ENCODE measurements at regions of chr14 and their contacts with region 1.

Region 1: GRCh38 chr14:30223385-30223813 is 295.8 kb upstream of the PRKD1 start:
- H3K4me3 ChIP-seq: no peak overlapping the region
- H3K27ac ChIP-seq: no peak overlapping the region
- H3K4me1 ChIP-seq: peaks cover 20% of the 10 kb centered on the region
- CTCF ChIP-seq: no peak

Region 2: GRCh38 chr14:30243805-30244204 is 20.4 kb after region 1 on chr14:
- CTCF ChIA-PET with region 1: no interaction called
- POLR2A ChIA-PET with region 1: no interaction called
- H3K4me3 ChIP-seq: no peak overlapping the region
- H3K27ac ChIP-seq: no peak overlapping the region
- H3K4me1 ChIP-seq: no peaks in the 10 kb centered on the region
- CTCF ChIP-seq: no peak

Region 3: GRCh38 chr14:30291216-30291615 is 67.8 kb after region 1 on chr14:
- CTCF ChIA-PET with region 1: no interaction called
- POLR2A ChIA-PET with region 1: no interaction called
- H3K4me3 ChIP-seq: no peak overlapping the region
- H3K27ac ChIP-seq: no peak overlapping the region
- H3K4me1 ChIP-seq: no peaks in the 10 kb centered on the region
- CTCF ChIP-seq: no peak

Region 4: GRCh38 chr14:30312214-30312613 is 88.8 kb after region 1 on chr14:
- CTCF ChIA-PET with region 1: no interaction called
- POLR2A ChIA-PET with region 1: no interaction called
- H3K4me3 ChIP-seq: no peak overlapping the region
- H3K27ac ChIP-seq: no peak overlapping the region
- H3K4me1 ChIP-seq: no peaks in the 10 kb centered on the region
- CTCF ChIP-seq: no peak

Region 5: GRCh38 chr14:30389134-30389876 is 165.9 kb after region 1 on chr14:
- CTCF ChIA-PET with region 1: no interaction called
- POLR2A ChIA-PET with region 1: no interaction called
- H3K4me3 ChIP-seq: no peak overlapping the region
- H3K27ac ChIP-seq: no peak overlapping the region
- H3K4me1 ChIP-seq: no peaks in the 10 kb centered on the region
- CTCF ChIP-seq: no peak

Region 6: DNA sequence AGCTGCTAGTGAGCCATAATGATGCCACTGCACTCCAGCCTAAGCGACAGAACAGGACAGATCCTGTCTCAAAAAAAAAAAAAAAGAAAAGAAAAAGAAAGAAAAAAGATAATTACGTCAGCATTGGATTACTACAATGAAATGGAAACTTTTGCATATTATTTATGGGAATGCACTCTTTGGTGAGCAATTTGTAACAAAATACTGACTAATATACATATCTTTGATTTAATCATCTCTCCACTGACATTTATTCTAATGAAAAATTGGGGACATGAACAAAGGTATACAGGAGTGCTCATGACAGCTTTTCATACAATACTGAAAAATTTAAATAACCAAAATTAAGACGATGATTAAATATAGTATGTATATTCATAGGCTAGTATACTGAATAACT is 1012.1 kb after region 1 on chr14:
- CTCF ChIA-PET with region 1: interaction called, 11 read pairs
- POLR2A ChIA-PET with region 1: no interaction called
- H3K4me3 ChIP-seq: no peak overlapping the region
- H3K27ac ChIP-seq: no peak overlapping the region
- H3K4me1 ChIP-seq: no peaks in the 10 kb centered on the region
- CTCF ChIP-seq: no peak

Measured in HEK293 (cell line).